ENCODE measurements at regions of chr19 and their contacts with region 1.

Region 1: DNA sequence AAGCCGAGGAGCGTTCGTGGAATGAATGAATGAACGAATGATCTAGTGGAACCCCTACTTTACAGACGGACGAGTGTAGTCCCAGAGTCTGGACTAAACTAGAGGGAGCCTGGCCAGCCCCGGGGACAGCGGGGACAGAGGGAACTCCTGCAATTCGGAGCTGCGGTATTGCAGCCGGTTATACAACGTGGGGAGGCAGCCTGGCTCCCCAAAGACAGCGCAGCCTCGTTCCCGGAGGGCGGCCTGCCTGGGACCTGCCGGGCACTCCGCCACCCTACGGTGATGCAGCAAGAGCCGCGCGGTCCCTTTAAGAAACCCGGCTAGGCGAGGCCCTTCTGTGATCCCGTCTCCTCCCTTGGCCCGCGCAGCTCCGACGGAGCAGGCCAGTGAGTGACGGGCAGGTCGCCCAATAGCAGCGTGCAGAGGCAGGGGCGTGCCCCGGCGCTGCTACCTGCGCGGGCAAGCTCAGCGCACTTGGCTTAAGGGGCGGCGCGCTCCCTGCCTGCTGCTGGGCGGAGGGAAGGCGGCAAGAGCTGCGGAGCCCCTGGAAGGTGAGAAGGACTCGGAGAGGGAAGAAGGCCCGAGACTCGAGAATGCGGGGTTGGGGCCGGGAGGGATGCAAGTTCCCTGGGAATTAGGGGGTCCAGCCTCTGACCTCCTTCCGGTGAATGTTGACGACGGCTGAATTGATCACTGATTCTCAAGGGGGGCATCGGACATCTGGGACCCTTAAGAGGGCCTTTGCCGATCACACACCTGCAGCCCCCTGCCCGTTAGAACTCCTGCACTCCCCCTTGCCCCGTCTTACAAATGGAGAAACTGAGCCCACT is at the start of gene ABCA7:
- DNase-seq: peak; percentile 99
- H3K4me3 Mint-ChIP-seq: peak within 1 kb of the TSS; percentile 84
- H3K27ac Mint-ChIP-seq: peak within 1 kb of the TSS; percentile 82
- H3K4me1 Mint-ChIP-seq: peaks cover 41% of the 10 kb centered on the region
- H3K27me3 Mint-ChIP-seq: no peaks in the 10 kb centered on the region
- total RNA-seq, gene ABCA7: 28.3 to 29.3 TPM

Region 2: GRCh38 chr19:1026189-1027019 is 13.5 kb before region 1 on chr19 and contains the start of gene CNN2:
- CTCF ChIA-PET with region 1: interaction called, 7 read pairs
- POLR2A ChIA-PET with region 1: interaction called, 23 read pairs
- intact Hi-C with region 1: loop called (anchors 2 kb)
- DNase-seq: peak; percentile 79
- H3K4me3 Mint-ChIP-seq: peak within 1 kb of the TSS; percentile 92
- H3K27ac Mint-ChIP-seq: peak within 1 kb of the TSS; percentile 86
- H3K4me1 Mint-ChIP-seq: peaks cover 30% of the 10 kb centered on the region
- H3K27me3 Mint-ChIP-seq: no peaks in the 10 kb centered on the region
- total RNA-seq, gene CNN2: 123 to 130 TPM

Measured in activated CD4-positive, alpha-beta memory T cell treated with anti-CD3 and anti-CD28 coated beads for 36 hours (primary cell).